Panc1 (cell line): ENCODE measurements at regions of chr10 and their contacts with region 1.

Region 1: GRCh38 chr10:472241-472910 is 217.1 kb downstream of the DIP2C start:
- DNase-seq: no peak
- ATAC-seq: no peak
- H3K4me3 ChIP-seq: no peak overlapping the region
- H3K27ac ChIP-seq: no peak overlapping the region
- H3K4me1 ChIP-seq: no peaks in the 10 kb centered on the region
- H3K27me3 ChIP-seq: no peaks in the 10 kb centered on the region
- CTCF ChIP-seq: no peak

Region 2: DNA sequence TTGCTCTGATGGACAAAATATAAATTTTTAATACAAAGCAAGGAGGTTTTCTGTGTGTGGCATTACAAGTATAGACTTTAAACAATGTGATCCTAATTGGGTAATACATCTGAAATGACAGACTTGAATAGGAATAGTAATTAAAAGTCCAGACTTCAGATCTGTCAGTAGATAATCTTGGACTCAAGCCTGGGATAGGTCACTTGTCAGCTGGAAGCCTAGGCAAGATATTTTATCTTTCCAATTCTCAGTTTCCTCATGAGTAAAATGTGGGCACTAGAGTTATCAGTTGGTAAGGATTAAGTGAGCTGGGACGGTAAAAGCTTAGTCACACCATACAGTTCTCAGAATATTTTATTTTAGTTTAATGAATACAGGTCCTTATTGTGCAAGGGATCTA is 347.5 kb before region 1 on chr10:
- CTCF ChIA-PET with region 1: no interaction called
- POLR2A ChIA-PET with region 1: interaction called, 15 read pairs
- in situ Hi-C with region 1: no loop called
- intact Hi-C with region 1: no loop called
- DNase-seq: no peak
- ATAC-seq: no peak
- H3K4me3 ChIP-seq: no peak overlapping the region
- H3K27ac ChIP-seq: no peak overlapping the region
- H3K4me1 ChIP-seq: peaks cover 4% of the 10 kb centered on the region
- H3K27me3 ChIP-seq: no peaks in the 10 kb centered on the region; the same call in 1 of the 2 replicates
- CTCF ChIP-seq: no peak

Region 3: GRCh38 chr10:323651-324293 is 148.6 kb before region 1 on chr10:
- CTCF ChIA-PET with region 1: no interaction called
- POLR2A ChIA-PET with region 1: no interaction called
- in situ Hi-C with region 1: no loop called
- intact Hi-C with region 1: no loop called
- DNase-seq: peak; percentile 85
- ATAC-seq: peak; percentile 99
- H3K4me3 ChIP-seq: peak overlapping the region in 1 of 2 experiments; percentile 41; a peak in 2 of 4 replicates
- H3K27ac ChIP-seq: no peak overlapping the region; the same call in 1 of the 2 replicates
- H3K4me1 ChIP-seq: no peaks in the 10 kb centered on the region; the same call in 1 of the 2 replicates
- H3K27me3 ChIP-seq: no peaks in the 10 kb centered on the region
- CTCF ChIP-seq: no peak

Region 4: GRCh38 chr10:373522-374309 is 98.7 kb before region 1 on chr10:
- CTCF ChIA-PET with region 1: no interaction called
- POLR2A ChIA-PET with region 1: no interaction called
- in situ Hi-C with region 1: no loop called
- intact Hi-C with region 1: no loop called
- DNase-seq: no peak
- ATAC-seq: no peak
- H3K4me3 ChIP-seq: no peak overlapping the region
- H3K27ac ChIP-seq: no peak overlapping the region
- H3K4me1 ChIP-seq: no peaks in the 10 kb centered on the region; the same call in 1 of the 2 replicates
- H3K27me3 ChIP-seq: no peaks in the 10 kb centered on the region
- CTCF ChIP-seq: no peak